ENCODE measurements at regions of chr11 and their contacts with region 1.

Region 1: DNA sequence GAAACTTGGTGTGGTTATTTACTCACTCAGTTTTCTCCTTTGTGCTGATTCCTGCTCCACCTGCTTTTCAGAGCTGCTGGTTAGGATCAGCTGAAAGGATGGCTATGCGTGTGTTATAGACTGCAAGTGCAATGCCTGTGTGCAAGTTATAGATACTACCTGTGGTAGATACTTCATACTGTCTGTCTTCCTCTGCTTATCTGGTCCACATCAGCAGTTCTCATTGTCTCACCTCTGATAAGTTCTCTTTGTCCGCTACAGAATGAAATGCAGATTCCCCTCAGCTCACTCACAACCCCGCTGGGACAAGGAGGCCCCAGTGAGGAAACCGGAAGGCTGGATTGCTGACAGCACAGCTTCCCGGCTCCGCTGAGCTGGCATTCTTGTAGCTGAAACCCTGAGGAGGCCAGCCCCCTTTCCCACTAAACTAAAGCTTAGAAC is 37.5 kb upstream of the LYVE1 start:
- DNase-seq: peak; percentile 41
- H3K4me3 Mint-ChIP-seq: no peak overlapping the region
- H3K27ac Mint-ChIP-seq: no peak overlapping the region
- H3K4me1 Mint-ChIP-seq: peaks cover 20% of the 10 kb centered on the region
- H3K27me3 Mint-ChIP-seq: peaks cover under 1% of the 10 kb centered on the region
- CTCF ChIP-seq: no peak

Region 2: DNA sequence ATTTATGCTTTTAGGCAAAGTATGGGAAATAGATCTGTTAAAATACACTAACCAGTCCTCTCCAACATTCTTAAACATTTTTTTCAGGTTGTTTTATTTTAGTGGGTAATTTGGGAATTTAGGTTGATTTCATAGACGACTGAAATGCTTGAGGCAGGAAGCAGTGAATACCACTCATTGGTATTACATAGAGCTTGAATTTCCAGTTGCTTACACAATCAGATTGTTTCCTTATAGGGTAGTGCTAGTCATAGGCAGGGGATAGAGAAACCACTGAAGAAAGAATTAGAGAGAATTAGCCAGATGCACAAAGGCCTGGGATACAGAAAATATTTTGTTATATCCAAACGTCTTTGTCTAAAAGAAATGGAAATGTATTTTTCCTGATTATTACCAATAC is 13.6 kb before region 1 on chr11:
- CTCF ChIA-PET with region 1: interaction called, 3 read pairs
- POLR2A ChIA-PET with region 1: interaction called, 11 read pairs
- intact Hi-C with region 1: no loop called
- DNase-seq: peak; percentile 72
- H3K4me3 Mint-ChIP-seq: no peak overlapping the region
- H3K27ac Mint-ChIP-seq: peak overlapping the region; percentile 90
- H3K4me1 Mint-ChIP-seq: peaks cover 44% of the 10 kb centered on the region
- H3K27me3 Mint-ChIP-seq: no peaks in the 10 kb centered on the region
- CTCF ChIP-seq: no peak